K562 (cell line): ENCODE measurements at regions of chr3 and their contacts with region 1.

Region 1: GRCh38 chr3:196287440-196288148 is at the start of gene PCYT1A:
- DNase-seq: peak; percentile 88 to 97 (median 92)
- ATAC-seq: peak; percentile 91
- H3K4me3 ChIP-seq: peak within 1 kb of the TSS; percentile 78
- H3K27ac ChIP-seq: peak within 1 kb of the TSS; percentile 92
- H3K4me1 ChIP-seq: peaks cover 18 to 22% of the 10 kb centered on the region in 2 experiments; a peak in 4 of 5 replicates
- H3K27me3 ChIP-seq: no peaks in the 10 kb centered on the region
- CTCF ChIP-seq: no peak
- EP300 ChIP-seq: no peak
- POLR2A ChIP-seq: peak; percentile 96
- RAD21 ChIP-seq: no peak; a peak in 2 of 4 replicates
- polyA plus RNA-seq, gene PCYT1A: 13.4 to 13.5 TPM

Region 2: GRCh38 chr3:196111939-196112386 is 175.6 kb before region 1 on chr3:
- CTCF ChIA-PET with region 1: no interaction called
- POLR2A ChIA-PET with region 1: no interaction called
- in situ Hi-C with region 1: no loop called
- intact Hi-C with region 1: no loop called
- DNase-seq: no peak
- ATAC-seq: no peak
- H3K4me3 ChIP-seq: no peak overlapping the region
- H3K27ac ChIP-seq: 0 out of 3 replicates have a peak overlapping the region, but pooled peaks have one; percentile 18
- H3K4me1 ChIP-seq: peaks cover 22 to 42% of the 10 kb centered on the region in 2 experiments; a peak in 4 of 5 replicates
- H3K27me3 ChIP-seq: no peaks in the 10 kb centered on the region
- CTCF ChIP-seq: no peak
- EP300 ChIP-seq: no peak
- POLR2A ChIP-seq: no peak
- RAD21 ChIP-seq: no peak

Region 3: GRCh38 chr3:196251918-196252317 is 35.7 kb before region 1 on chr3:
- CTCF ChIA-PET with region 1: no interaction called
- POLR2A ChIA-PET with region 1: no interaction called
- in situ Hi-C with region 1: no loop called
- intact Hi-C with region 1: loop called (anchors 2 kb)
- DNase-seq: no peak
- ATAC-seq: no peak
- H3K4me3 ChIP-seq: no peak overlapping the region
- H3K27ac ChIP-seq: no peak overlapping the region
- H3K4me1 ChIP-seq: no peaks in the 10 kb centered on the region
- H3K27me3 ChIP-seq: no peaks in the 10 kb centered on the region
- CTCF ChIP-seq: no peak
- EP300 ChIP-seq: no peak
- POLR2A ChIP-seq: no peak
- RAD21 ChIP-seq: no peak

Region 4: GRCh38 chr3:196274585-196274984 is 13.0 kb before region 1 on chr3:
- CTCF ChIA-PET with region 1: no interaction called
- POLR2A ChIA-PET with region 1: interaction called, 18 read pairs
- in situ Hi-C with region 1: no loop called
- intact Hi-C with region 1: loop called (anchors 1 kb)
- DNase-seq: peak; percentile 42 to 84 (median 60)
- ATAC-seq: peak; percentile 74
- H3K4me3 ChIP-seq: peak overlapping the region; percentile 2; the same call in 1 of the 2 replicates
- H3K27ac ChIP-seq: peak overlapping the region; percentile 66
- H3K4me1 ChIP-seq: peaks cover 32 to 33% of the 10 kb centered on the region in 2 experiments
- H3K27me3 ChIP-seq: no peaks in the 10 kb centered on the region
- CTCF ChIP-seq: no peak
- EP300 ChIP-seq: peak; percentile 60
- POLR2A ChIP-seq: no peak
- RAD21 ChIP-seq: no peak

Region 5: DNA sequence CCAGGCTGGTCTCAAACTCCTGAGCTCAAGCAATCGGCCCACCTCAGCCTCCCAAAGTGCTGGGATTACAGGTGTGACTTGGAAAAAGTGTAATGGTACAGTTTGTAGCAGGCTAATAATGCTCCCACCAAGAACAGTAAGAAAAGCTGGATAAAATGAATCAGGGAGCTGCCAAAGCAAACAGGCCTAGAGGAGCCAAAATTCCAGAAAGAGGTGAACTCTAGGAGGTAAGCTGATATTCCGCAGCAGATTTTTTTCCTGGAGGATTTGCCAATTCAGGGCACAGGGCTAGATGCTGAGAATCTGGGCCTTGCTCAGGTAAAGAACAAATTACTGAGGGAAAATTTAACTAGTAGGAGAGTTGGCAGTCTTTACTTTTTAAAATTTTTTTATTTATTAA is 10.9 kb after region 1 on chr3:
- CTCF ChIA-PET with region 1: no interaction called
- POLR2A ChIA-PET with region 1: interaction called, 13 read pairs
- in situ Hi-C with region 1: no loop called
- intact Hi-C with region 1: no loop called
- DNase-seq: no peak
- ATAC-seq: no peak
- H3K4me3 ChIP-seq: no peak overlapping the region
- H3K27ac ChIP-seq: no peak overlapping the region
- H3K4me1 ChIP-seq: peaks cover 0 to 2% of the 10 kb centered on the region in 2 experiments; a peak in 1 of 5 replicates
- H3K27me3 ChIP-seq: no peaks in the 10 kb centered on the region
- CTCF ChIP-seq: no peak
- EP300 ChIP-seq: no peak
- POLR2A ChIP-seq: no peak
- RAD21 ChIP-seq: no peak

Region 6: GRCh38 chr3:196572389-196572788 is 284.8 kb after region 1 on chr3:
- CTCF ChIA-PET with region 1: no interaction called
- POLR2A ChIA-PET with region 1: no interaction called
- in situ Hi-C with region 1: no loop called
- intact Hi-C with region 1: no loop called
- DNase-seq: peak in 2 of 4 experiments; percentile 11 to 27
- ATAC-seq: no peak
- H3K4me3 ChIP-seq: no peak overlapping the region
- H3K27ac ChIP-seq: no peak overlapping the region
- H3K4me1 ChIP-seq: peaks cover 25 to 32% of the 10 kb centered on the region in 2 experiments
- H3K27me3 ChIP-seq: no peaks in the 10 kb centered on the region
- CTCF ChIP-seq: no peak
- EP300 ChIP-seq: no peak
- POLR2A ChIP-seq: no peak
- RAD21 ChIP-seq: no peak